WTC11 (cell line): ENCODE measurements at regions of chr16 and their contacts with region 1.

Region 1: DNA sequence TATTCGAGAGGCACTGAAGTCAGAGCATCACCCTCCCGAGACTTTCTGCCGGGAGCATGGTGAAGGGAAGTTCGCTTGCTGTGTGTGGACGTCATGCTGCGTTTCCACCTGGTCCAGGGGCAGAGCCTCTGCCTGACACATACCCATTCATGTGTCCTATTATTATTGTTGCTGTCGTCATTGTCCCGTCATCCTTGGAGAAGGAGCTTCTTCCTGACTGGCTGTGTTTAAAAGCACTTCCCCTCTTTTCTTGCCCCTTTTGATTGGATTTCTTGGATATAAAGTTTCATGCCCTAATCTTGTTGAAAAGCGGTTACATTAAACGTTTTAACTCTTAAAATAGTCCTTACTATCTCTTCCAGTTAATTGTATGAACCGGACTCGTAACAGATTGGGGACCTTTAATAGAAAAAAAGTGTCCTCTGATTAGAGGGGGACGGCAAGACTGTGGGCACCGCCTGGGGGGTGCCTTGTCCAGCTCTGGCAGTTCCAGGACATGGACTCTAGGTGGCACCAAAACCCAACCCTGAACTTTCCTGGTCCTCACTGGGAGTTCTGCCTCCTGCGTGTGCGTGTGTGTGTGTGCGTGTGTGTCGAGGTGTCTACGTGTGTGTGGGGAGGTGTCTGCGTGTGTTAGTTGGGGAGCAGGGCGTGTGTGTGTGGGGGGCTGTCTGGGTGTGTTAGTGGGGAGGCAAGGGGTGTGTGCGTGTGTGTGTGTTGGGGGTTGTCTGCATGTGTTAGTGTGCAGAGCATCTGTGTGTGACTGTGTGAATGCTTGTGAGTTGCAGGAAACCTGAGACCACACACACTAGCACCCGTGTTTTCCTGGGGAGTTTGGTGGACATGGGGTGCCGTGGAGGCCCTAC is 133.3 kb upstream of the CIBAR2 start:
- DNase-seq: peak; percentile 73
- ATAC-seq: peak; percentile 77
- H3K4me3 Mint-ChIP-seq: no peak overlapping the region
- H3K27ac Mint-ChIP-seq: no peak overlapping the region
- H3K4me1 Mint-ChIP-seq: peaks cover 24% of the 10 kb centered on the region
- H3K27me3 Mint-ChIP-seq: no peaks in the 10 kb centered on the region
- CTCF ChIP-seq: peak; percentile 65

Region 2: GRCh38 chr16:85234310-85235204 is 11.0 kb before region 1 on chr16:
- CTCF ChIA-PET with region 1: interaction called, 12 read pairs
- POLR2A ChIA-PET with region 1: no interaction called
- DNase-seq: peak; percentile 92
- ATAC-seq: peak; percentile 70
- H3K4me3 Mint-ChIP-seq: peak overlapping the region; percentile 58
- H3K27ac Mint-ChIP-seq: peak overlapping the region; percentile 87
- H3K4me1 Mint-ChIP-seq: peaks cover 37% of the 10 kb centered on the region
- H3K27me3 Mint-ChIP-seq: no peaks in the 10 kb centered on the region; the same call in 1 of the 2 replicates
- CTCF ChIP-seq: no peak

Region 3: DNA sequence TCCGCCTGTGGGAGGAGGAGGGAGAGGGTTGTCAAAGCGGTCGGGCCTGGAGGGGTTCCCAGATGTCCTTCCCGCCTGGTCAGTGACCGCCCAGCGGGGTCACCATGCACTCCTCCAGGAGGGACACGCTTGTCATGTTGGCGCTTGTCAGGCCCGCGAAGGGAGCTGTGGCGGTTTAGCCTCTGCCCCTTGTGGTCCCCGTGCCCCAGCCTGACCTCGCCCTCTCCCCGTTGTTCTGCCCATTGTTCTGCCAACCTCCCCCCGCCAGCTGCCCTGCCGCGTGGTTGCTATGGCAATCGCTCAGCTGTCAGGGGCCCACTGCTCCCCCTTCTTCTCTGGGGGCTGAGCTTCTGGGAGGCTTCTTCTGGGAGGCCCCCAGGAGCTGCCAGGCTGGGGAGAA is 13.1 kb after region 1 on chr16:
- CTCF ChIA-PET with region 1: interaction called, 37 read pairs
- POLR2A ChIA-PET with region 1: no interaction called
- DNase-seq: no peak
- ATAC-seq: no peak
- H3K4me3 Mint-ChIP-seq: no peak overlapping the region
- H3K27ac Mint-ChIP-seq: no peak overlapping the region
- H3K4me1 Mint-ChIP-seq: no peaks in the 10 kb centered on the region
- H3K27me3 Mint-ChIP-seq: no peaks in the 10 kb centered on the region
- CTCF ChIP-seq: no peak